ENCODE measurements at regions of chr11 and their contacts with region 1.

Region 1: DNA sequence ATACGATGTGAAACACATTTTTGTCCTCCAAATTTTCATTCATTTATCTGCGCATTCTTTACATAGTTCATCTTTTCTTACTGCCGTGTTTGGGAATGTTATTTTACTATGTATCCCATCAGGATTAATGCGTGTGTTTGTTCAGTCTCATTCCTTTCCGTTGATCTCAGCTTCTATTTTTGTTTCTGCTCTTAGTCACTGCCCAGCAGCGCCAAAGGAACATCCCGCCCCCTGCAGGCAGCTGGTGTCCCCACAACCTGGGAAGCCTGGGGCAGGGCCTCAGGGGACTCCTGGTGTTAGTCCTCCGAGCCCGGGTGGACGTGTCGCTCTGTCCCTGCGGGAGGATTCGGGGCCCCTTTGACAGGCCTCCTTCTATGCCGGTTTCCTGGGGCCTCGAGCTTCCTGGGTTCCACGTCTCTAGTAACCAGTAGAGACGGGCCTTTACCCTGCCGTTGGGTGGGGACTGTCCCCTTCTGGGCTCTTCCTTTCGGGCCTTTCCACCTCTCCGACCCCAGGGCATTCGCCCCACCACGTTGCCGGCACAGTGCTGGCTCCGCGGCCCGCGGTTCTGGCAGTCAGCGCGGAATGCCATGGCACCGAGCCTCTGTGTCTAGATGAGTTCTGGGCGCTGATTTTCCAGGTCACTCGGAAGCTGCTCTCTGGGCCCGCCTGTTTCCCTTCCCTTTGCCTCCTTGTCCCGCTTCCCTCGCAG is 39.8 kb downstream of the WEE1 start:
- DNase-seq: peak; percentile 97

Region 2: GRCh38 chr11:9460322-9461067 is 152.8 kb before region 1 on chr11 and contains the start of gene ZNF143:
- intact Hi-C with region 1: loop called (anchors 5 kb)
- DNase-seq: peak; percentile 100
- total RNA-seq, gene ZNF143: 22.6 TPM

Region 3: GRCh38 chr11:9534791-9535781 is 78.2 kb before region 1 on chr11:
- intact Hi-C with region 1: loop called (anchors 5 kb)
- DNase-seq: peak; percentile 80

Region 4: DNA sequence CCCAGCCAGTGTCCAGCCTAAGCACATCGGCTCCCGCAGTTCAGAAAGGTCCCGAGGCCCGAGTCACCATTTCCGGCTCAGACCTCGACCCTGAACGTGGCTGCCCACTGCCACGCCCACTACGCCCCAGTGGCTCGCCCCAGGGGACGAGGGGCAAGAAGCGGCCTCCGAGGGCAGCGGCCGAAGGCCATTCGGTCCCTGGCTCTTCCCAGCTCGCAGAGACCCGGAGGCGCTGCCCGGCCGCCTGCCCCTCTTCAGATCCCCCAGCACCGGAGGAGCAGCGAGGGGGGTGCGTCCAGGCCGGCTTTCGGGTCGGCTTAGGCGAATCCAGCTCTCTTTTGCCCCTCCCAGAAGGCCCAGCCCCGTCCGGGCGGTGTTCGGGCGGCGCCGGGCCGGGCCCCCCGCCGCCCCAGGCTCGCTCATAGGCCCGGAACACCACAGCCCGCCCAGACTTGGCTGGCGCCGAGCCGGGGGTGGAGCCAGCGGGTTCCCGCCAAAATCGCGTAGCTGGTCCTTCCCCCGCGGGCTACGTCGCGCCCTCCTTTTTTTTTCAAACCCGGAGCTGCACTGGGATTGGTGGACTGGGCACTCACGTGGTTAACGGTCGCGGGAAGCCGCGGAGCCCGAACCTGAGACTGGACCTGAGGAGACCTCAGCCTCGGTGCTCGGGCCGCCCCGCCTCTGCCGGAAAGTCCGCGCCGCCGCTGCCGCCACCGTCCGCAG is 40.1 kb before region 1 on chr11 and contains the start of gene WEE1:
- intact Hi-C with region 1: loop called (anchors 2 kb)
- DNase-seq: peak; percentile 99
- total RNA-seq, gene WEE1: 95.1 TPM

Region 5: DNA sequence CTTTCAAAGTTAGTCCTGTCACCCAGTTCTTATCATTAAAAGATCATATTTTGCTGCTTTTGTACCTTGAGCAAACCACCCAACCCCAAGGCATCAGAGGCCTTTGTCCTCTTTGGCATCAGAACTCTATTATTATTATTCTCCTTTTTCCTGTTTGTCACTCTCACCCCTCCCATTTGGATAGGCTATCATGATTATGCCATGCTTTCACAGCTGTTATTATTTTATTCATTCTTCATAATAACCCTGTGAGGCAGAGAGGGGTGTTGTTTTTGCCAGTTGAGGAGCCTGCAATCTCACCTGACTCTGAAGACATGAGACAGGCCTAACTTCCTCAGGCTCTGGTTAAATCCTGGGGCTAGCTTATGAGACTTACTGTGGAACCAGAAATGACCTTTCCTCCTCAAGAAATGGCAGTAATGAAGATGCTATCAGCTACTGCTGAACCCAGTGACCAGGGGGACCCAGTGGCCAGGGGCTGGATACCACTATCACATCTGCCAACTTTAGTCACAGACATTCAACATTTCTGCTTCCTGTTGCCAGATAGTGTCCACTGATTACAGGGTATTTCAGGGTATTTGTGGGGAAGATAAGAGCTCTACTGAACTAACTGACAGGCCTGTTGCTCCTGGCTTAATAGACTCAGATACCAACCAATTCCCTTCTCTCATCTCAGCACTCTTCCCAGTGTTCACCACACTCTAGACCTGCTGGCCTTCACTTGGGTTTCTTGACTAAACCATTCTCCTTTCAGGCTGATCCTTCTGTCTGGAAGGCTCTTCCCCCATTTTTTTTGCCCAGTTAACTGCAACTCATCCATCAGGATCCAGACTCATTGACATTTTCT is 38.9 kb after region 1 on chr11:
- intact Hi-C with region 1: no loop called
- DNase-seq: no peak

Region 6: GRCh38 chr11:9663699-9664275 is 50.5 kb after region 1 on chr11 and contains the start of gene SWAP70:
- intact Hi-C with region 1: loop called (anchors 2 kb)
- DNase-seq: peak; percentile 96
- total RNA-seq, gene SWAP70: 27.6 TPM

Region 7: GRCh38 chr11:9748361-9748970 is 135.2 kb after region 1 on chr11:
- intact Hi-C with region 1: loop called (anchors 2 kb)
- DNase-seq: no peak